Naive thymus-derived CD8-positive, alpha-beta T cell (primary cell): ENCODE measurements at regions of chr10 and their contacts with region 1.

Region 1: DNA sequence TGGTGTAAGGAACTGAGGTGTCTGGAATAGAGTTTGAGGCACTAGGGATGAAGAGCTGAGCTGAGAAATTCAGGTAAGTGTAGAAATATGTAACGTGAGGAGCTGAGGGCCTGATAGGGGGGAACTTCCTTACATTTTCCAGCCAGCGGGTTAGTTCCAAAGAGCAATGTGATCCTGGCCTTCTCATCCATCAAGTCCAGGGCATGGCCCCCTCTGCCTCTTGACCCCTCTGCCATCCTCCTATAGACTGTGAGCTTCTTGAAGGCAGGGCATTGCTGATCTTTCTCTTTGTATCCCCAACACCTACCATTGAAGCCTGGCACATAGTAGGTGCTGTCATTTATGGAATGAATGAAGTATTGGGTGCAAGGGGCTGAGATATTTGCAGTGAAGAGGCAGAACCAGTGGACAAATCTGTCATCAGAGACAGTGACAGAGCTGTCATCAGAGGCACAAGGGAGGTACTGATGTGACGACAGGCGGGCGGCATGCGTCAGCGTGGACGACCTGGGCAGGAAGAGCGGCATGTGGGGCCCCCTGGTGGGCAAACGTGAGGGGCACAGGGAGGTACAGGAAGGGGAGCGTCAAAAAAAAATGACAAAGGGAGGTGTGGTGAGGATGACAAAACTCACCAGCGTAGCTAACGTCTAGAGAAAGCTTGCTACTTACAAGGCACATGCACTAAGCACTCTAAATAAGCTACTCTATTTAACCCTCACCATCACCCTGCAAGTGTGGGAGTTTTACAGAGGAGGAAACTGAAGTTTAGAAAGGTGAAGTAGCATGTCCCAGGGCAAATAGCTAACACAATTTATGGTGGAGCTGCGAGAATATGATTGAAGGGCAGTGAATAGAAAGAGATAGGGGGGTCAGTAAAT is 5.2 kb upstream of the CAMK2G start:
- DNase-seq: peak; percentile 90 to 97 (median 93)
- ATAC-seq: peak; percentile 85 to 88
- H3K4me3 Mint-ChIP-seq: peak overlapping the region in 2 of 10 donors; percentile 1 to 51
- H3K27ac Mint-ChIP-seq: peak overlapping the region; percentile 41 to 95 (median 82)
- H3K4me1 Mint-ChIP-seq: peaks cover 23 to 43% (median 42%) of the 10 kb centered on the region in 4 donors
- H3K27me3 Mint-ChIP-seq: peaks cover 0 to 2% (median 0%) of the 10 kb centered on the region in 5 donors

Region 2: GRCh38 chr10:73837072-73837471 is 42.5 kb before region 1 on chr10:
- POLR2A ChIA-PET with region 1: no interaction called
- DNase-seq: no peak
- ATAC-seq: no peak
- H3K4me3 Mint-ChIP-seq: no peak overlapping the region
- H3K27ac Mint-ChIP-seq: peak overlapping the region in 1 of 10 donors; percentile 34
- H3K4me1 Mint-ChIP-seq: peaks cover 0 to 10% (median 5%) of the 10 kb centered on the region in 4 donors
- H3K27me3 Mint-ChIP-seq: no peaks in the 10 kb centered on the region

Region 3: GRCh38 chr10:73865459-73866442 is 13.8 kb before region 1 on chr10:
- POLR2A ChIA-PET with region 1: interaction called, 106 read pairs
- DNase-seq: peak in 8 of 10 donors; percentile 22 to 57 (median 38)
- ATAC-seq: peak; percentile 81 to 82
- H3K4me3 Mint-ChIP-seq: peak overlapping the region; percentile 77 to 94 (median 86)
- H3K27ac Mint-ChIP-seq: peak overlapping the region; percentile 92 to 97 (median 95)
- H3K4me1 Mint-ChIP-seq: peaks cover 37 to 94% (median 91%) of the 10 kb centered on the region in 4 donors
- H3K27me3 Mint-ChIP-seq: no peaks in the 10 kb centered on the region

Region 4: GRCh38 chr10:73908853-73909538 is 29.5 kb after region 1 on chr10:
- POLR2A ChIA-PET with region 1: no interaction called
- DNase-seq: no peak
- ATAC-seq: no peak
- H3K4me3 Mint-ChIP-seq: peak overlapping the region in 4 of 10 donors; percentile 30 to 40 (median 36)
- H3K27ac Mint-ChIP-seq: no peak overlapping the region
- H3K4me1 Mint-ChIP-seq: peaks cover 15 to 35% (median 30%) of the 10 kb centered on the region in 4 donors
- H3K27me3 Mint-ChIP-seq: peaks cover 38 to 84% (median 55%) of the 10 kb centered on the region in 5 donors

Region 5: DNA sequence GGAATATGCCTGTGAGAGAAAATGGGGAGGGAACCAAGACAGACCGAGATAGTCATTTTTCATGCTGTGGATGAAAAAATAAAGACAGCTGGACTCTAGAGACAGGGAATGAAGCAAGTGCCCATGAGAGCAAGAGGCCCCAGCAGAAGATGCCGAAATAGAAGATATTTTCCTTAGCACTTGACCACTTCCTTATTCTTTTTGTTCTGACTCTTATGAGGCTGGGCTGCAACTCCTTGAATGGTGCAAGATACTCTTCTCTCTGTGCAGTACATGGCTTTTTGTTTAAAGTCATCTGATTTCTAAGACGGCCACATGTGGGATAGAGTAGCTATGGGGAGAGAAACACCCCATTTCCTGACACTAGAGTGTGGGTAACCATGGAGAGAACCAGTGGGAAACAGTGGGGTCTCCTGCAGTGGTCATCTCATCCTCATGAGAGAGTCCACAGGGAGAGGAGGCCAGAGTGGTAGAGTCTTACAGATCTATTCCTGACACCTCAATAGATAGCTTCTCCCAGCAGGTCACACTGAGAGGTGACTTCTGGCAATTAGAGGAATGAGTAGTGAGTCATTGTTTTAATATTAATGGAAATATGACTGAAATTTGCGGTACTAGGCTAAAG is 100.4 kb after region 1 on chr10:
- POLR2A ChIA-PET with region 1: no interaction called
- DNase-seq: no peak
- ATAC-seq: no peak
- H3K4me3 Mint-ChIP-seq: no peak overlapping the region
- H3K27ac Mint-ChIP-seq: peak overlapping the region in 1 of 10 donors; percentile 10
- H3K4me1 Mint-ChIP-seq: peaks cover 6 to 31% (median 12%) of the 10 kb centered on the region in 4 donors
- H3K27me3 Mint-ChIP-seq: no peaks in the 10 kb centered on the region

Region 6: DNA sequence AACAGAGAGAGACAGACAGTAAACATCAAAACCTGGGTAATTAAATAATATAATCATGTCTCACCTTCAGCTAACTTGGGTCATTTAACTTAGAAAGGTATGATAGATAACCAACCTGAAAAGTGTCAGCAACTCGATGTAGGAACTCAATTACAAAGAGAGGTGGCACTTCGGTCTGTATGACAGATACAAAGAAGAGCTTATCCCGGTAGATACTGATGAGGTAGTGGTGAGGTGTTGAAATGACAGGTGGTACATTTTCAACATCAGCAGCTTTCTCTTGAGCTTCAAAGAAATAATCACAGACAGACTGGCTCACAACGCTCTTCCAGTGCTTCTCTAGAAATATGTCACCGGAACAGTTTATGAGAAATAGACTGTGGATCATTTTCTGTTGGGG is 258.5 kb after region 1 on chr10:
- POLR2A ChIA-PET with region 1: no interaction called
- DNase-seq: no peak
- ATAC-seq: peak in 1 of 2 donors; percentile 46
- H3K4me3 Mint-ChIP-seq: no peak overlapping the region
- H3K27ac Mint-ChIP-seq: peak overlapping the region in 1 of 10 donors; percentile 76
- H3K4me1 Mint-ChIP-seq: peaks cover 6 to 15% (median 9%) of the 10 kb centered on the region in 4 donors
- H3K27me3 Mint-ChIP-seq: no peaks in the 10 kb centered on the region